Activated naive CD4-positive, alpha-beta T cell treated with anti-CD3 and anti-CD28 coated beads for 36 hours (primary cell): ENCODE measurements at regions of chr2 and their contacts with region 1.

Region 1: GRCh38 chr2:74178201-74179062 is at the start of gene MOB1A:
- DNase-seq: peak; percentile 99
- H3K4me3 Mint-ChIP-seq: peak within 1 kb of the TSS; percentile 84
- H3K27ac Mint-ChIP-seq: peak within 1 kb of the TSS; percentile 86
- H3K4me1 Mint-ChIP-seq: peaks cover 44% of the 10 kb centered on the region
- H3K27me3 Mint-ChIP-seq: no peaks in the 10 kb centered on the region
- total RNA-seq, gene MOB1A: 129 to 131 TPM

Region 2: GRCh38 chr2:74020702-74021406 is 157.6 kb before region 1 on chr2:
- CTCF ChIA-PET with region 1: no interaction called
- intact Hi-C with region 1: no loop called
- DNase-seq: no peak
- H3K4me3 Mint-ChIP-seq: no peak overlapping the region
- H3K27ac Mint-ChIP-seq: no peak overlapping the region
- H3K4me1 Mint-ChIP-seq: peaks cover 64% of the 10 kb centered on the region
- H3K27me3 Mint-ChIP-seq: no peaks in the 10 kb centered on the region

Region 3: GRCh38 chr2:74119912-74120825 is 58.3 kb before region 1 on chr2:
- CTCF ChIA-PET with region 1: interaction called, 3 read pairs
- intact Hi-C with region 1: loop called (anchors 1 kb)
- DNase-seq: peak; percentile 88
- H3K4me3 Mint-ChIP-seq: peak overlapping the region; percentile 82
- H3K27ac Mint-ChIP-seq: peak overlapping the region; percentile 88
- H3K4me1 Mint-ChIP-seq: peaks cover 12% of the 10 kb centered on the region
- H3K27me3 Mint-ChIP-seq: no peaks in the 10 kb centered on the region

Region 4: GRCh38 chr2:74191596-74192380 is 13.4 kb after region 1 on chr2:
- CTCF ChIA-PET with region 1: interaction called, 17 read pairs
- intact Hi-C with region 1: loop called (anchors 1 kb)
- DNase-seq: no peak
- H3K4me3 Mint-ChIP-seq: no peak overlapping the region
- H3K27ac Mint-ChIP-seq: no peak overlapping the region
- H3K4me1 Mint-ChIP-seq: peaks cover 2% of the 10 kb centered on the region
- H3K27me3 Mint-ChIP-seq: peaks cover 2% of the 10 kb centered on the region

Region 5: GRCh38 chr2:74198461-74199274 is 20.2 kb after region 1 on chr2 and contains the start of gene MTHFD2:
- CTCF ChIA-PET with region 1: interaction called, 17 read pairs
- intact Hi-C with region 1: loop called (anchors 1 kb)
- DNase-seq: peak; percentile 95
- H3K4me3 Mint-ChIP-seq: peak within 1 kb of the TSS; percentile 97
- H3K27ac Mint-ChIP-seq: peak within 1 kb of the TSS; percentile 99
- H3K4me1 Mint-ChIP-seq: peaks cover 36% of the 10 kb centered on the region
- H3K27me3 Mint-ChIP-seq: no peaks in the 10 kb centered on the region
- total RNA-seq, gene MTHFD2: 683 to 692 TPM

Region 6: GRCh38 chr2:74206180-74206688 is 27.8 kb after region 1 on chr2:
- CTCF ChIA-PET with region 1: interaction called, 13 read pairs
- intact Hi-C with region 1: loop called (anchors 1 kb)
- DNase-seq: peak; percentile 60
- H3K4me3 Mint-ChIP-seq: peak overlapping the region; percentile 47
- H3K27ac Mint-ChIP-seq: peak overlapping the region; percentile 93
- H3K4me1 Mint-ChIP-seq: peaks cover 69% of the 10 kb centered on the region
- H3K27me3 Mint-ChIP-seq: no peaks in the 10 kb centered on the region

Region 7: GRCh38 chr2:74221604-74222299 is 43.3 kb after region 1 on chr2:
- CTCF ChIA-PET with region 1: no interaction called
- intact Hi-C with region 1: no loop called
- DNase-seq: no peak
- H3K4me3 Mint-ChIP-seq: no peak overlapping the region
- H3K27ac Mint-ChIP-seq: peak overlapping the region; percentile 50
- H3K4me1 Mint-ChIP-seq: no peaks in the 10 kb centered on the region
- H3K27me3 Mint-ChIP-seq: no peaks in the 10 kb centered on the region

Region 8: DNA sequence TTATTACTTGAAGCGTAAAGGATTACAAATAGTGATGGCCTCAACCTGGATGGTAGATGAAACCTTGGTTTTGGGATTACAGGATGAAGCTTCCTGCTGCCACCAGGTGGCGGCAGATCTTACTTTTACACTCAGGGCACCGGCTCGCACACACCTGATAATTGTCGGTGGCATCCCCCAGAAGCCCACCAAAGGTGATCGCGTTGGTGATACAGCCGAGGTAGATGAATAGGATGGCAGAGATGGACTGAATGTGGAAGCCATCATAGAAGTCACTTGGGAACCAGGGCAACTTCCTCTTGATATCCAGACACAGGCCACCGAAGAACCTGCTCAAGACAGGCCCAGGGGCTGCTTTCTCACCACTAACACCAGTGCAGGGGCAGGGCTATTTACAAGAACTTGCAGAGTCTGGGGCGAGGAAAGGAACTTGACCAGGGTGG is 71.8 kb after region 1 on chr2:
- CTCF ChIA-PET with region 1: no interaction called
- intact Hi-C with region 1: no loop called
- DNase-seq: peak; percentile 68
- H3K4me3 Mint-ChIP-seq: no peak overlapping the region
- H3K27ac Mint-ChIP-seq: no peak overlapping the region
- H3K4me1 Mint-ChIP-seq: peaks cover 2% of the 10 kb centered on the region
- H3K27me3 Mint-ChIP-seq: no peaks in the 10 kb centered on the region